ENCODE measurements at regions of chr5 and their contacts with region 1.

Region 1: GRCh38 chr5:131252824-131253171 is 11.1 kb upstream of the CDC42SE2 start:
- DNase-seq: peak; percentile 66 to 95 (median 74)
- ATAC-seq: peak; percentile 80
- H3K4me3 ChIP-seq: peak overlapping the region; percentile 79
- H3K4me3 Mint-ChIP-seq: peak overlapping the region; percentile 93
- H3K27ac ChIP-seq: peak overlapping the region; percentile 76 to 87
- H3K27ac Mint-ChIP-seq: peak overlapping the region; percentile 86
- H3K4me1 ChIP-seq: peaks cover 53% of the 10 kb centered on the region
- H3K4me1 Mint-ChIP-seq: peaks cover 71% of the 10 kb centered on the region
- H3K27me3 ChIP-seq: no peaks in the 10 kb centered on the region
- H3K27me3 Mint-ChIP-seq: no peaks in the 10 kb centered on the region
- CTCF ChIP-seq: no peak

Region 2: DNA sequence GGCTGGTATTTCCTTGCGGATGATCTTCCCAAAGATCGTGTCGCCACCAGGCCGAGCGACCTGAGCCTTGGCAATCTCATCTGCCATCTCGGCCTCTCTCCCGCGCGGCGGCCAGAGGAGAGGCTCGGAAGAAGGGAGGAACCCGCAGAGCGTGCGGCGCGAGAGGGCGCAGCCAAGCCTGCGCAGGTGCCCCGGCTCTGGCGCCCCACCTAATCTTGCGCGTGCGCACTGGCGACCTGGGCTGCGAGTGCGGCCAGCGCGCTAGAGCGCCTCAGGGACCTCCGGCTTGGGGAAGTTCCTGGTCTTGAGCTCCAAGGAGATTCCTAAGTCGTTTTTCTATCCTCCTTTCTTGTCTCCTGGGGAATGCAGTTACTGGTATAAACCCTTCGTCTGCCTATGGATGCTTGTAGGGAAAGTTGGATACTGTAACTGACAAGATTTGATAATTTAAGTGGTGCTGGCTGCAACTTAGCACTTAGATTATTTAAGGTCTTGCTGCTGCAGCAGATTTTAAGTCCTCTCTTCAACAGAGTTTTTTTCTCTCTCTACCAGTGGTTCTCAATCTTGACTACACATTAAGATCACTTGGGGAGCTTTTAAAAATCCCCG is 87.6 kb before region 1 on chr5 and contains the start of gene HINT1:
- CTCF ChIA-PET with region 1: no interaction called
- POLR2A ChIA-PET with region 1: interaction called, 10 read pairs
- intact Hi-C with region 1: loop called in 1 of 2 experiments (anchors 1 kb)
- DNase-seq: peak; percentile 81 to 97 (median 92)
- ATAC-seq: peak; percentile 84
- H3K4me3 ChIP-seq: peak within 1 kb of the TSS; percentile 86
- H3K4me3 Mint-ChIP-seq: peak within 1 kb of the TSS; percentile 97
- H3K27ac ChIP-seq: peak within 1 kb of the TSS; percentile 92 to 93
- H3K27ac Mint-ChIP-seq: peak within 1 kb of the TSS; percentile 88
- H3K4me1 ChIP-seq: peaks cover 28% of the 10 kb centered on the region
- H3K4me1 Mint-ChIP-seq: peaks cover 63% of the 10 kb centered on the region
- H3K27me3 ChIP-seq: no peaks in the 10 kb centered on the region
- H3K27me3 Mint-ChIP-seq: no peaks in the 10 kb centered on the region
- CTCF ChIP-seq: peak; percentile 37
- total RNA-seq, gene HINT1: 257 to 263 TPM

Region 3: DNA sequence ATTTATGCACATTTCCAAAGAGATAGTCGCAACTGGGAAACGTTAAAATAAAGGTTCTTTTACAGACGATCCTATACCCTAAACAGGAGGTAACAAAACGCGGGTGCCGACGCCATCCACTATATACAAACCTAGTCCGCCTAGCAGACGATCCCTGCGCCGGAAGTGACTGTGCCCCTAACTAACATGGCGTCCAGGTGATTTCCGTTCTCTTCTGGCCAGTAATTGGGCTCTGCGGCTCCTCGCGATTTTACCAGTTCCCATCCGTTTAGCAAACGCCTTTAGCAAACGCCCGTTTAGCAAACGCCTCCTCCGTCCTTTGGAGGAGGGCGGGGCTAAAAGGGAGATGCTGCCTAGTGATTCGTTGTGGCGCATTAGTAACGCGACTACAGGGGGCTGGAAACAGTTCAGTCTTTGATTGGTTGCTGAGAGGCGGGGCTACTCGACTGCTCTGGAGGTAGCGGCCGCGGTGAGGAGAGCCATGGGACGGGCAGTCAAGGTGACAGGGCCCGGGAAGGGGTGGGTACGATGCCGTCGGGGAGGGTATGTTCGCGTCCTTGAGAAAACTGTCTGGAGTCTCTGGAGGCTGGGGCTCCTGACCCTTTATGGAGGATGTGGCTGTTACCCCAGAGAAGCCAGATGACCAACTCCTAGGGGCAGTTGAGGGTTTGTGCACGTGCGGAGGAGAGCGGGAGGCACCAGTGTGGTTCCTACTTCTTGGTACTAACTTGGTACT is 82.1 kb before region 1 on chr5 and contains the start of gene LYRM7:
- CTCF ChIA-PET with region 1: no interaction called
- POLR2A ChIA-PET with region 1: interaction called, 7 read pairs
- intact Hi-C with region 1: loop called in 1 of 2 experiments (anchors 1 kb)
- DNase-seq: peak; percentile 88 to 99 (median 92)
- ATAC-seq: peak; percentile 94
- H3K4me3 ChIP-seq: peak within 1 kb of the TSS; percentile 73
- H3K4me3 Mint-ChIP-seq: peak within 1 kb of the TSS; percentile 98
- H3K27ac ChIP-seq: peak within 1 kb of the TSS; percentile 70 to 74
- H3K27ac Mint-ChIP-seq: peak within 1 kb of the TSS; percentile 94
- H3K4me1 ChIP-seq: peaks cover 16% of the 10 kb centered on the region
- H3K4me1 Mint-ChIP-seq: peaks cover 55% of the 10 kb centered on the region
- H3K27me3 ChIP-seq: no peaks in the 10 kb centered on the region
- H3K27me3 Mint-ChIP-seq: no peaks in the 10 kb centered on the region
- CTCF ChIP-seq: no peak
- total RNA-seq, gene LYRM7: 8.3 to 11.9 TPM

Region 4: DNA sequence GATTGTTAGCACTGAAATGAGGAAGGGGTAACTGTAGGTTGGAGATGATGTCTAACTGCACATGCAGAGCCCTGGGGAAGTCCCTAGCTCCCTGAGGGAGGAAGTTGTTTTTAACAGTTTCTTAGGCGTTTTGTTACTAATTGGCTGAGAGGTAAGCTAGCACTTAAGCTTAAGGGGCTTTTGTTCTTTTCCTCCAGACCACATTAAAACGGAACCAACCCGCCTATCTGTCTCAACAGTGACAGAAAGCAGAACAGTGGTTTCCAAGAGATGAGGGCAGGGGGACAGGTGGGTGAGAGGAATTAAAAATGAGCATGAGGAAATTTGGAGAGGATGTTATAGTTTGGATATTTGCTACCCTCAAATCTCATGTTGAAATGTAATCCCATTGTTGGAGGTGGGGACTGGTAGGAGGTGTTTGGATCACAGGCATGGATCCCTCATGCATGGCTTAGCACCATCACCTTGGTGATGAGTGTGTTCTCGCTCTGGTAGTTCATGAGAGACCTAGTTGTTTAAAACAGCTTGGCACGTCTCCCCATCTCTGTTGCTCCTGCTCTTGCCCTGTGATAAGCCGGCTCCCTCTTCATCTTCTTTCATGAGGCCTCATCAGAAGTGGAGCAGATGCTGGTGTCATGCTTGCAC is 43.2 kb before region 1 on chr5:
- CTCF ChIA-PET with region 1: interaction called, 3 read pairs
- POLR2A ChIA-PET with region 1: interaction called, 23 read pairs
- intact Hi-C with region 1: loop called (anchors 1 to 5 kb)
- DNase-seq: peak; percentile 7 to 91 (median 40)
- ATAC-seq: peak; percentile 93
- H3K4me3 ChIP-seq: peak overlapping the region; percentile 19
- H3K4me3 Mint-ChIP-seq: peak overlapping the region; percentile 77
- H3K27ac ChIP-seq: peak overlapping the region; percentile 69 to 79
- H3K27ac Mint-ChIP-seq: peak overlapping the region; percentile 96
- H3K4me1 ChIP-seq: peaks cover 25% of the 10 kb centered on the region
- H3K4me1 Mint-ChIP-seq: peaks cover 62% of the 10 kb centered on the region
- H3K27me3 ChIP-seq: no peaks in the 10 kb centered on the region
- H3K27me3 Mint-ChIP-seq: no peaks in the 10 kb centered on the region
- CTCF ChIP-seq: no peak

Region 5: GRCh38 chr5:131270809-131271208 is 18.0 kb after region 1 on chr5:
- CTCF ChIA-PET with region 1: interaction called, 48 read pairs
- POLR2A ChIA-PET with region 1: interaction called, 309 read pairs
- intact Hi-C with region 1: no loop called
- DNase-seq: no peak
- ATAC-seq: no peak
- H3K4me3 ChIP-seq: peak overlapping the region; percentile 41
- H3K4me3 Mint-ChIP-seq: peak overlapping the region; percentile 81
- H3K27ac ChIP-seq: peak overlapping the region; percentile 75 to 87
- H3K27ac Mint-ChIP-seq: peak overlapping the region; percentile 85
- H3K4me1 ChIP-seq: peaks cover 64% of the 10 kb centered on the region
- H3K4me1 Mint-ChIP-seq: peaks cover 65% of the 10 kb centered on the region
- H3K27me3 ChIP-seq: no peaks in the 10 kb centered on the region
- H3K27me3 Mint-ChIP-seq: no peaks in the 10 kb centered on the region
- CTCF ChIP-seq: no peak

Region 6: GRCh38 chr5:131281133-131281867 is 28.5 kb after region 1 on chr5:
- CTCF ChIA-PET with region 1: no interaction called
- POLR2A ChIA-PET with region 1: interaction called, 15 read pairs
- intact Hi-C with region 1: loop called in 1 of 2 experiments (anchors 1 kb)
- DNase-seq: peak in 3 of 14 experiments; percentile 84 to 91 (median 90)
- ATAC-seq: peak; percentile 81
- H3K4me3 ChIP-seq: peak overlapping the region; percentile 52
- H3K4me3 Mint-ChIP-seq: peak overlapping the region; percentile 74
- H3K27ac ChIP-seq: peak overlapping the region; percentile 39 to 76
- H3K27ac Mint-ChIP-seq: peak overlapping the region; percentile 77
- H3K4me1 ChIP-seq: peaks cover 60% of the 10 kb centered on the region
- H3K4me1 Mint-ChIP-seq: peaks cover 80% of the 10 kb centered on the region
- H3K27me3 ChIP-seq: no peaks in the 10 kb centered on the region
- H3K27me3 Mint-ChIP-seq: no peaks in the 10 kb centered on the region
- CTCF ChIP-seq: no peak

Measured in CD4-positive, alpha-beta T cell (primary cell).